HepG2 (cell line): ENCODE measurements at regions of chr2 and their contacts with region 1.

Region 1: GRCh38 chr2:240566203-240567136 is 1.8 kb upstream of the RNPEPL1 start:
- DNase-seq: peak; percentile 92
- ATAC-seq: peak; percentile 83
- H3K4me3 ChIP-seq: peak overlapping the region; percentile 71 to 89 (median 71)
- H3K27ac ChIP-seq: peak overlapping the region; percentile 71
- H3K4me1 ChIP-seq: peaks cover 57% of the 10 kb centered on the region
- H3K27me3 ChIP-seq: no peaks in the 10 kb centered on the region; a peak in 1 of 5 replicates
- CTCF ChIP-seq: peak; percentile 81
- EP300 ChIP-seq: no peak
- POLR2A ChIP-seq: peak in 1 of 2 experiments; percentile 56; a peak in 2 of 4 replicates
- RAD21 ChIP-seq: peak; percentile 10

Region 2: GRCh38 chr2:240579771-240580614 is 13.5 kb after region 1 on chr2:
- CTCF ChIA-PET with region 1: interaction called, 4 read pairs
- POLR2A ChIA-PET with region 1: interaction called, 149 read pairs
- in situ Hi-C with region 1: no loop called
- intact Hi-C with region 1: loop called (anchors 2 kb)
- DNase-seq: peak; percentile 96
- ATAC-seq: peak; percentile 83
- H3K4me3 ChIP-seq: peak overlapping the region; percentile 33 to 63 (median 44)
- H3K27ac ChIP-seq: peak overlapping the region; percentile 80
- H3K4me1 ChIP-seq: peaks cover 61% of the 10 kb centered on the region
- H3K27me3 ChIP-seq: no peaks in the 10 kb centered on the region; a peak in 1 of 5 replicates
- CTCF ChIP-seq: peak; percentile 91
- EP300 ChIP-seq: peak in 1 of 2 experiments; percentile 24; a peak in 2 of 4 replicates
- POLR2A ChIP-seq: peak in 1 of 2 experiments; percentile 48; a peak in 2 of 4 replicates
- RAD21 ChIP-seq: peak; percentile 49